PC-9 (cell line): ENCODE measurements at regions of chr17 and their contacts with region 1.

Region 1: DNA sequence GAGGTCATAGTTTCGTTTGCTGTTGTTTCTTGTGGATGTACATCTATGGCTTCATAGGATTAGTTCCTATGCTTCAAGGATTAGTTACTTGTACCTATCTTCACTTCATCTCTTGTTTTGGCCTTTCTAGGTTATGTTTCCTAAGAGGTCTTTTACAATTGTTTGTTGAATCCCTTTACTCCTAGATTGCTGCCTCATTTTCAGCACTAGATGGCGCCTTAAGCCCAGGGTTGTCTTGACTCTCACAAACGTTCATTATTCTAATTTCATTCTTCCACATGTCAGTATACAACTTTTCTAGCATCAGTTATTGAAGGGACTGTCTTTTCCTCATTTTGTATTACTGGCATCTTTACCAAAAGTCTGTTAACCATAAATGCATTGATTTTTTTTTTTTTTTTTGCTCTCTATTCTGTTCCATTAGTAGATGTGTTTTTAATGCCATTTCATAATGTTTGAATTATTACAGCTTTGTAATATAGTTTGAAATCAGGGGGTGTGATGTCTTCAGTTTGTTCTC is 45.0 kb upstream of the NACA2 start:
- DNase-seq: peak; percentile 36 to 43
- H3K4me3 ChIP-seq: no peak overlapping the region
- H3K27ac ChIP-seq: no peak overlapping the region
- H3K4me1 ChIP-seq: no peaks in the 10 kb centered on the region
- H3K27me3 ChIP-seq: no peaks in the 10 kb centered on the region
- CTCF ChIP-seq: peak; percentile 90

Region 2: GRCh38 chr17:61536436-61536955 is 99.5 kb before region 1 on chr17:
- CTCF ChIA-PET with region 1: no interaction called
- POLR2A ChIA-PET with region 1: no interaction called
- intact Hi-C with region 1: no loop called
- DNase-seq: no peak
- H3K4me3 ChIP-seq: no peak overlapping the region
- H3K27ac ChIP-seq: no peak overlapping the region
- H3K4me1 ChIP-seq: no peaks in the 10 kb centered on the region
- H3K27me3 ChIP-seq: no peaks in the 10 kb centered on the region
- CTCF ChIP-seq: no peak

Region 3: DNA sequence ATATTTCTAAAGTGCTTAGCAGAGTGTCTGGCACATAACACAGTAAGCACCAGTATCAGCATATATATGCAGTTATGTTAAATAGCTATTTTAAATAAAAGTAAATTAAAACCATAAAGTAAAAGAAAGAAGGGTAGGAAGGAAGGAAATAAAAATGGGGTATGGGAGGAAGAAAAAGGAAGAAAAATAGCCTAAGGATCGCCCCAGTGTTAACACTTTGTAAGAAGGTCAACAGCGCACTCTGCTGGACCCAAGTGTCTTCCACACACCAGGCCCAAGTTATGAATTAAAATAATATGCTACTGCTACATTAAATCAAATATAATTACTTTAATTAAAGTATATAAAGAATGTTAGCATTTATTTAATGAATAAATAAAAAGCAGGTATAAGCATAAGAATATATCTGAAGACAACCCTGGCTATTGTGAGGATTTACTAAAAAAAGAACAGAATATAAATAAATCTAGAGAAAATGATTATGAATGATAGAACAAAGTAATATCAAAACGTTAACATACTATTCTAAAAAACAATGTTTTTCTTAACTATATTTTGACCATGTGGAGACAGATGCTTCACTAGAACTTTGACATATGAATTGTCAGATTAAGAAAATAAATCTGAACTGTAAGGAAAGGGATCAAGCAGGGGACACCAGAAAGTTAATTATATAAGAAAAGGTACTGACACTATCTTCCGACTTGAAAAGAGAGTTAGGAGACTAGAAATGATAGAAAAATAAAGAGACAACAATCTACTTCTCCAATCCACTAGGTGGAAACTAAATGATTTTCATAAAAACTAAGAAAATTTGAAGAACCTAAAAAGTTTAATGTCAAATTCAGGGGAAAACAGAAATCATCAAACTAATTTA is 201.4 kb after region 1 on chr17:
- CTCF ChIA-PET with region 1: interaction called, 6 read pairs
- POLR2A ChIA-PET with region 1: no interaction called
- intact Hi-C with region 1: loop called (anchors 1 kb)
- DNase-seq: peak in 1 of 2 experiments; percentile 48
- H3K4me3 ChIP-seq: no peak overlapping the region
- H3K27ac ChIP-seq: no peak overlapping the region
- H3K4me1 ChIP-seq: peaks cover 25% of the 10 kb centered on the region
- H3K27me3 ChIP-seq: no peaks in the 10 kb centered on the region
- CTCF ChIP-seq: peak; percentile 87